Activated CD4-positive, alpha-beta T cell treated with anti-CD3 and anti-CD28 coated beads for 36 hours (primary cell): ENCODE measurements at regions of chr3 and their contacts with region 1.

Region 1: GRCh38 chr3:40207796-40208195 is 101.7 kb upstream of the EIF1B start:
- DNase-seq: no peak
- ATAC-seq: no peak
- H3K4me3 Mint-ChIP-seq: no peak overlapping the region
- H3K27ac Mint-ChIP-seq: no peak overlapping the region
- H3K4me1 Mint-ChIP-seq: no peaks in the 10 kb centered on the region
- H3K27me3 Mint-ChIP-seq: no peaks in the 10 kb centered on the region

Region 2: DNA sequence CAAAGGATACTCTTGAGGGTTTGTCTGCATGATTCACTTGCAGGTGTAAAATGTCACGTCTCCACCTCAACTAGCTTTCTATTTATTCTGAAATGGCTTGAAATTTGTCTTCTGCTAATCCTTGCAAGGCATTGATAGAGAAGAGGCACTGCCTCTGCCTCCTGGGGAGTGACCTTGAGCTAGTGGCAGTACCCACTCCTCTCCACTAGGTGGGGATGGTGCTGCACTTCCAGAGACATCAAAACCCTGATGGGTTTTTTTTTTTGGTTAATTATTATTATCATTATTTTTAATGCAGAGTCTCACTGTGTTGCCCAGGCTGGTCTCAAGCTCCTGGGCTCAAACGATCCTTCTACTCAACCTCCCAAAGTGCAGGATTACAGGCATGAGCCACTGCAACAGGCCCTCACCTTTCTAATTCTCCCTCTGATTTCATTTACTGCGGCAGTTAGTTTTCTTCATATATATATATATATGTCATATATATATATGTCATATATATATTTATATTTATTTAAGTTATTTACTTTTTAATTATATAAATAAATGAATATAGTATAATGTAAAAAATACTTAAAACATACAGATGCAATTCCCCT is 15.8 kb before region 1 on chr3:
- CTCF ChIA-PET with region 1: interaction called, 11 read pairs
- POLR2A ChIA-PET with region 1: no interaction called
- intact Hi-C with region 1: no loop called
- DNase-seq: peak; percentile 72
- ATAC-seq: peak; percentile 57
- H3K4me3 Mint-ChIP-seq: no peak overlapping the region
- H3K27ac Mint-ChIP-seq: no peak overlapping the region
- H3K4me1 Mint-ChIP-seq: no peaks in the 10 kb centered on the region
- H3K27me3 Mint-ChIP-seq: no peaks in the 10 kb centered on the region

Region 3: GRCh38 chr3:40278791-40279190 is 71.0 kb after region 1 on chr3:
- CTCF ChIA-PET with region 1: no interaction called
- POLR2A ChIA-PET with region 1: no interaction called
- intact Hi-C with region 1: no loop called
- DNase-seq: no peak
- ATAC-seq: no peak
- H3K4me3 Mint-ChIP-seq: no peak overlapping the region
- H3K27ac Mint-ChIP-seq: no peak overlapping the region
- H3K4me1 Mint-ChIP-seq: no peaks in the 10 kb centered on the region
- H3K27me3 Mint-ChIP-seq: no peaks in the 10 kb centered on the region